ENCODE measurements at regions of chr7 and their contacts with region 1.

Region 1: GRCh38 chr7:64665980-64666662 is at the start of gene ZNF107:
- DNase-seq: peak; percentile 89
- ATAC-seq: peak; percentile 96
- H3K4me3 ChIP-seq: peak within 1 kb of the TSS; percentile 97
- H3K27ac ChIP-seq: peak within 1 kb of the TSS; percentile 87
- H3K4me1 ChIP-seq: no peaks in the 10 kb centered on the region
- H3K27me3 ChIP-seq: no peaks in the 10 kb centered on the region
- CTCF ChIP-seq: no peak
- EP300 ChIP-seq: no peak
- POLR2A ChIP-seq: peak; percentile 90
- RAD21 ChIP-seq: no peak
- polyA plus RNA-seq, gene ZNF107: 3.2 to 3.7 TPM

Region 2: DNA sequence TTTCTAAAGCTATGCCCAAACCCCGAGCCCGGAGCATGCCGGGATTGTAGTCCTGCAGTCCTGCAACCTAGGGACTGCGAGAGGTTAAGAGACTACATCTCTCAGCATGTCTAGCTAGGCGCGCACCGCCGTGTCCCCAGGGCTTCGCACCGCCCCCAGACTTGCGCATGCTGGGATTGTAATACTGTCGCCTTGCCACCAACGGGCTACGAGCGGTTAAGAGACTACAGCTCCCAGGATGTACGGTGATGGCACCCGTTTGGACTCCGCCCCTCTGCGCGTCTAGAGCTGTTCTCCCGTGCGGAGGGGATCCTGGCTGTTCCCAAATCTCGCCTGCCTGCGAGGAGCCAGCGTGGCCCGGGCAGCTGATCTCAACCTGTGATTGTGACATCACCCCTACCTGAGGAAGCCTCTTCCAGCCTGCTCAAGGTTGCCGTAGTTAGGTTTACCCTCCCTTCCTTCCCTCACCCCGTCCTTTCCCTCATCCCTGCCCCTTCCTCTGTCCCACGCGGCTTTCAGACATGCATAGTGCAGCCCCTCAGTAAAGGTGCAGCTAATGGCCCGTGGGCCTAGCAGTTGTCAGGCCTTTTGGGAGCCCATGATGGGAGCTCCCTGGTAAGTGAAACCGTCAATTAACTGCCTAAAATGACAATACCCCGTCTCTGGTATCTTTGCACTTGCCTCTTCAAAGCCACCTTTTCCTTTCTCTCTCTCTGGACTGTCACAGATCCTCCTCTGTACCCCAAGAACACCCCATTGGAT is 358.7 kb before region 1 on chr7:
- CTCF ChIA-PET with region 1: no interaction called
- POLR2A ChIA-PET with region 1: interaction called, 3 read pairs
- RAD21 ChIA-PET with region 1: no interaction called
- SMC1A ChIA-PET with region 1: interaction called, 3 read pairs
- in situ Hi-C with region 1: loop called (anchors 10 kb)
- intact Hi-C with region 1: loop called (anchors 2 kb)
- DNase-seq: peak; percentile 89
- ATAC-seq: peak; percentile 98
- H3K4me3 ChIP-seq: peak overlapping the region; percentile 80
- H3K27ac ChIP-seq: peak overlapping the region; percentile 82
- H3K4me1 ChIP-seq: no peaks in the 10 kb centered on the region; the same call in 1 of the 2 replicates
- H3K27me3 ChIP-seq: no peaks in the 10 kb centered on the region
- CTCF ChIP-seq: no peak
- EP300 ChIP-seq: 0 out of 4 replicates have a peak, but pooled peaks of 1 of the 2 experiments have one; percentile 22
- POLR2A ChIP-seq: peak; percentile 77
- RAD21 ChIP-seq: no peak

Region 3: GRCh38 chr7:64562626-64563275 is 103.4 kb before region 1 on chr7 and contains the start of gene ZNF680:
- CTCF ChIA-PET with region 1: no interaction called
- POLR2A ChIA-PET with region 1: interaction called, 4 read pairs
- RAD21 ChIA-PET with region 1: no interaction called
- SMC1A ChIA-PET with region 1: interaction called, 4 read pairs
- in situ Hi-C with region 1: no loop called
- intact Hi-C with region 1: loop called (anchors 5 kb)
- DNase-seq: peak; percentile 75
- ATAC-seq: peak; percentile 99
- H3K4me3 ChIP-seq: peak within 1 kb of the TSS; percentile 74
- H3K27ac ChIP-seq: peak within 1 kb of the TSS; percentile 75
- H3K4me1 ChIP-seq: no peaks in the 10 kb centered on the region
- H3K27me3 ChIP-seq: no peaks in the 10 kb centered on the region
- CTCF ChIP-seq: no peak
- EP300 ChIP-seq: no peak
- POLR2A ChIP-seq: peak; percentile 82
- RAD21 ChIP-seq: no peak
- polyA plus RNA-seq, gene ZNF680: 5.0 to 6.2 TPM

Region 4: DNA sequence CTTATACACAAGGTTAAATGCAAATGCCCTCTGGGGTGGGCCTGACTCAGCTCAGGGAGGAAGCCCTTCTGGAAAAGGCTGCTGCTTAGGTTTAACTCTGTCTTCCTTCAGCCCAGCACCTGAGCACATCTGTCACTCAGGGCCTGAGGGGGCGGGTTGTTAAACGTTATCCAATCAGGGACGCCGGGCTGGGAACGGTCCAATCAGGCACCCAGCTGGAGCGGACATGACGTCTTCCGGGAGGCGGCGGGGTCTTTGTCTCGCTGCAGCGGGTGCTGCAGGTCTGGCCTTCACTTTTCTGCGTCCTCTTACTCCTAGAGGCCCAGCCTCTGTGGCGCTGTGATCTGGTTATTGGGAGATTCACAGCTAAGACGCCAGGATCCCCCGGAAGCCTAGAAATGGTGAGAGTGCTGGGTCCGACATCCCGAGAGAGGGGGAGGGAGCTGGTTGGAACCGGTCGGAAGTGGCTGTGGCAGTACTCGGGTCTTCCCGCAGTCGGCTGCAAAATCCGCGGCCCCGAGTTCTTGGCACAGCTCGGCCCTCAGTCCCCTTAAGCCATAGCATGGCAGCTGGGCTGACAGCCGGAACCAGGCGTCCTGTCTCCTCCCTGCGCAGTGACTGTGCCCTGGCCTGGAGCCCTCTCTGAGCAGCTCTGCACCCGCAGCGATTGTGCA is 128.2 kb after region 1 on chr7 and contains the start of gene ZNF138:
- CTCF ChIA-PET with region 1: interaction called, 4 read pairs
- POLR2A ChIA-PET with region 1: interaction called, 4 read pairs
- RAD21 ChIA-PET with region 1: interaction called, 5 read pairs
- SMC1A ChIA-PET with region 1: no interaction called
- in situ Hi-C with region 1: no loop called
- intact Hi-C with region 1: loop called (anchors 5 kb)
- DNase-seq: peak; percentile 84
- ATAC-seq: peak; percentile 100
- H3K4me3 ChIP-seq: peak within 1 kb of the TSS; percentile 88
- H3K27ac ChIP-seq: peak within 1 kb of the TSS; percentile 92
- H3K4me1 ChIP-seq: no peaks in the 10 kb centered on the region
- H3K27me3 ChIP-seq: no peaks in the 10 kb centered on the region
- CTCF ChIP-seq: no peak
- EP300 ChIP-seq: no peak
- POLR2A ChIP-seq: peak; percentile 90
- RAD21 ChIP-seq: no peak
- polyA plus RNA-seq, gene ZNF138: 8.6 to 11.0 TPM

Region 5: DNA sequence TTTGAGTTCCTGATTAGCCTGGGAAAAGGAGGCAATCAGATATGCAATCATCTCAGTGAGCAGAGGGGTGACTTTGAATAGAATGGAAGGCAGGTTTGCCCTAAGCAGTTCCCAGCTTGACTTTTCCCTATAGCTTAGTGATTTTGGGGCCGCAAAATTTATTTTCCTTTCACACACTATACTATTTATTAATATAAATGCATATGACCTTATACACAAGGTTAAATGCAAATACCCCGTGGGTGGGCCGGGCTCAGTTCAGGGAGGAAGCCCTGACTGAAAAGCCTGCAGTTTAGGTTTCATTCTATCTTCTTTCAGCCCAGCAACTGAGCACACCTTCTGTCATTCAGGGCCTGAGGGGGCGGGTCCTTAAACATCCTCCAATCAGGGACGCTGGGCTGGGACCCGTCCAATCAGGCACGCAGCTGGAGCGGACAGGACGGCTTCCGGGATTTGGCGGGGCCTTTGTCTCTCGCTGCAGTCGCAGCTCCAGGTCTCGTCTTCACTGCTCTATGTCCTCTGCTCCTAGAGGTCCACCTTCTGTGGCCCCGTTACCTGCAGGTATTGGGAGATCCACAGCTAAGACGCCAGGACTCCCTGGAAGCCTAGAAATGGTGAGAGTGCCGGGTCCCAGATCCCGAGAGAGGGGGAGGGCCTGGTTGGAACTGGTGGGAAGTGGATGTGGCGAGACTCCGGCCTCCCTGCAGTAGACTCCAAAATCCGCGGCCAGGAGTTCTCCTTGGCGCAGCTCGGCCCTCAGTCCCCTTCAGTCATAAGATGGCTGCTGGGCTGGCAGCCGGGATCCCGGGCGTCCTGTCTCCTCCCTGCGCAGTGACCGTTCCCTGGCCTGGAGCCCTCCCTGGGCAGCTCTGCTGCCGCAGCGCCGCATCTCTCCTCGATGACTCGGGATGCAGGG is 236.9 kb after region 1 on chr7 and contains the start of gene ZNF273:
- CTCF ChIA-PET with region 1: interaction called, 3 read pairs
- POLR2A ChIA-PET with region 1: interaction called, 3 read pairs
- RAD21 ChIA-PET with region 1: interaction called, 4 read pairs
- SMC1A ChIA-PET with region 1: no interaction called
- in situ Hi-C with region 1: no loop called
- intact Hi-C with region 1: loop called (anchors 5 kb)
- DNase-seq: peak; percentile 71
- ATAC-seq: peak; percentile 96
- H3K4me3 ChIP-seq: peak within 1 kb of the TSS; percentile 69
- H3K27ac ChIP-seq: peak within 1 kb of the TSS; percentile 94
- H3K4me1 ChIP-seq: no peaks in the 10 kb centered on the region
- H3K27me3 ChIP-seq: no peaks in the 10 kb centered on the region
- CTCF ChIP-seq: no peak
- EP300 ChIP-seq: no peak
- POLR2A ChIP-seq: peak; percentile 87
- RAD21 ChIP-seq: no peak
- polyA plus RNA-seq, gene ZNF273: 5.1 to 10.3 TPM

Region 6: GRCh38 chr7:65006094-65006992 is 340.2 kb after region 1 on chr7 and contains the start of gene ERV3-1:
- CTCF ChIA-PET with region 1: no interaction called
- POLR2A ChIA-PET with region 1: interaction called, 3 read pairs
- RAD21 ChIA-PET with region 1: no interaction called
- SMC1A ChIA-PET with region 1: no interaction called
- in situ Hi-C with region 1: no loop called
- intact Hi-C with region 1: loop called (anchors 10 kb)
- DNase-seq: peak; percentile 90
- ATAC-seq: peak; percentile 99
- H3K4me3 ChIP-seq: peak within 1 kb of the TSS; percentile 94
- H3K27ac ChIP-seq: peak within 1 kb of the TSS; percentile 88
- H3K4me1 ChIP-seq: no peaks in the 10 kb centered on the region
- H3K27me3 ChIP-seq: no peaks in the 10 kb centered on the region
- CTCF ChIP-seq: no peak
- EP300 ChIP-seq: no peak
- POLR2A ChIP-seq: peak; percentile 95
- RAD21 ChIP-seq: no peak
- polyA plus RNA-seq, gene ERV3-1: 9.4 to 11.7 TPM

Region 7: DNA sequence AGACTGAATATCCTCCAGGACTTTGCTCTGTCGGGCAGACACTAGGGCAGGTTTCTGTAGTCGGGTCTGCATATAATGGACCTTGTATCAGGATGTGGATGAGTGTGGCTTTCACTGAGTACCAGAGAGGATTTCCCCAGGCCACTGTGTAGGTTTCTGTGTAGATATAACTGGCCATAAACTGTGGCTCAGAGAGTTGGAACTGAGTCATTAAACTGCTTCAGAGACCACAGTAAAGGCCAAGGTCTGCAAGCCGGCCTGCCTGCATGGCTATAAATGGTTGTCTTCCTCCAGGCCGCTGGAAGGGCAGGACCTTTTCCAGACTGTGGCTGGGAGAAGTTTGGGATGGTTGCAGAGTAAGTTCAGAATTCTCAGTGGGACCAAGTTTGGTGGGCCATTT is 724.5 kb after region 1 on chr7:
- CTCF ChIA-PET with region 1: no interaction called
- POLR2A ChIA-PET with region 1: no interaction called
- RAD21 ChIA-PET with region 1: no interaction called
- SMC1A ChIA-PET with region 1: no interaction called
- in situ Hi-C with region 1: no loop called
- intact Hi-C with region 1: loop called (anchors 10 kb)
- DNase-seq: peak; percentile 65
- ATAC-seq: peak; percentile 98
- H3K4me3 ChIP-seq: no peak overlapping the region
- H3K27ac ChIP-seq: peak overlapping the region; percentile 56
- H3K4me1 ChIP-seq: no peaks in the 10 kb centered on the region; the same call in 1 of the 2 replicates
- H3K27me3 ChIP-seq: no peaks in the 10 kb centered on the region
- CTCF ChIP-seq: no peak
- EP300 ChIP-seq: peak in 1 of 2 experiments; percentile 67; a peak in 1 of 4 replicates
- POLR2A ChIP-seq: no peak
- RAD21 ChIP-seq: no peak

Measured in GM12878 (cell line).